ENCODE measurements at regions of chr13 and their contacts with region 1.

Region 1: GRCh38 chr13:112443995-112444860 is 68.1 kb downstream of the SPACA7 start:
- DNase-seq: peak; percentile 38 to 50
- ATAC-seq: peak; percentile 83 to 94
- H3K4me3 ChIP-seq: no peak overlapping the region
- H3K27ac ChIP-seq: no peak overlapping the region
- H3K4me1 ChIP-seq: no peaks in the 10 kb centered on the region
- CTCF ChIP-seq: peak; percentile 53
- EP300 ChIP-seq: no peak
- POLR2A ChIP-seq: no peak
- RAD21 ChIP-seq: peak; percentile 84 to 91

Region 2: GRCh38 chr13:111474136-111475002 is 969.9 kb before region 1 on chr13:
- CTCF ChIA-PET with region 1: interaction called, 113 read pairs
- POLR2A ChIA-PET with region 1: no interaction called
- DNase-seq: peak; percentile 31 to 58
- ATAC-seq: peak; percentile 58 to 88; a peak in 4 of 6 replicates
- H3K4me3 ChIP-seq: no peak overlapping the region
- H3K27ac ChIP-seq: no peak overlapping the region
- H3K4me1 ChIP-seq: no peaks in the 10 kb centered on the region
- CTCF ChIP-seq: peak; percentile 47
- EP300 ChIP-seq: no peak
- POLR2A ChIP-seq: no peak
- RAD21 ChIP-seq: peak; percentile 66 to 68

Region 3: GRCh38 chr13:111484141-111484925 is 959.9 kb before region 1 on chr13:
- CTCF ChIA-PET with region 1: interaction called, 16 read pairs
- POLR2A ChIA-PET with region 1: no interaction called
- DNase-seq: no peak
- ATAC-seq: no peak
- H3K4me3 ChIP-seq: no peak overlapping the region
- H3K27ac ChIP-seq: no peak overlapping the region
- H3K4me1 ChIP-seq: no peaks in the 10 kb centered on the region
- CTCF ChIP-seq: no peak
- EP300 ChIP-seq: no peak
- POLR2A ChIP-seq: no peak
- RAD21 ChIP-seq: no peak

Region 4: GRCh38 chr13:112606109-112607001 is 162.1 kb after region 1 on chr13:
- CTCF ChIA-PET with region 1: interaction called, 12 read pairs
- POLR2A ChIA-PET with region 1: no interaction called
- DNase-seq: peak; percentile 53 to 76
- ATAC-seq: peak; percentile 100
- H3K4me3 ChIP-seq: peak overlapping the region; percentile 47
- H3K27ac ChIP-seq: peak overlapping the region; percentile 55 to 81
- H3K4me1 ChIP-seq: no peaks in the 10 kb centered on the region
- CTCF ChIP-seq: peak; percentile 83
- EP300 ChIP-seq: no peak
- POLR2A ChIP-seq: no peak
- RAD21 ChIP-seq: peak; percentile 78 to 89